PC-9 (cell line): ENCODE measurements at regions of chr20 and their contacts with region 1.

Region 1: DNA sequence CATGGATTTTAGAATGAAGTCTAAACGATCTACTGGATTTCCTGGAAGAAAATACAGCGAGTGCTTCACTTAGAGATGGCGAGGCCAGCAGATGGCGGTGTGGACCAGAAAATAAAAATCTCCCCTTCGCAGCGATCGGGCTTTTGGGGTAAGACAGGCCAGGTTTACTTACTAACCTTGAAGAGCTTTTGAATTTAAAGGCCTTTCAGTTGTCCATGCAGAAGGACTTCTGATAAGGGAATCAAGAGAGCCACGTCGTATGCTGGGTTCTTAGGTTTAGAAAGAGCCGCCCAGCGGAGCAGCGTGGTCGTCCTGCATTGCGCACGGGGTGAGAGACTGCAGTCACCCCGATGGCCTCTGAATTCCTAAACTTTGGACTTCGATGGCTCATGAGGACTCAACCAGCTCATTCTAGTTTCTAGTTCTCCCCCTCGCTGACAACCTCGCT is 125.2 kb upstream of the RALGAPA2 start:
- DNase-seq: peak in 1 of 2 experiments; percentile 35
- H3K4me3 ChIP-seq: no peak overlapping the region
- H3K27ac ChIP-seq: no peak overlapping the region
- H3K4me1 ChIP-seq: no peaks in the 10 kb centered on the region
- H3K27me3 ChIP-seq: peaks cover 51% of the 10 kb centered on the region
- CTCF ChIP-seq: peak; percentile 79

Region 2: GRCh38 chr20:20894753-20895152 is 57.2 kb after region 1 on chr20:
- CTCF ChIA-PET with region 1: no interaction called
- POLR2A ChIA-PET with region 1: no interaction called
- intact Hi-C with region 1: no loop called
- DNase-seq: no peak
- H3K4me3 ChIP-seq: no peak overlapping the region
- H3K27ac ChIP-seq: no peak overlapping the region
- H3K4me1 ChIP-seq: no peaks in the 10 kb centered on the region
- H3K27me3 ChIP-seq: peaks cover 64% of the 10 kb centered on the region
- CTCF ChIP-seq: no peak

Region 3: DNA sequence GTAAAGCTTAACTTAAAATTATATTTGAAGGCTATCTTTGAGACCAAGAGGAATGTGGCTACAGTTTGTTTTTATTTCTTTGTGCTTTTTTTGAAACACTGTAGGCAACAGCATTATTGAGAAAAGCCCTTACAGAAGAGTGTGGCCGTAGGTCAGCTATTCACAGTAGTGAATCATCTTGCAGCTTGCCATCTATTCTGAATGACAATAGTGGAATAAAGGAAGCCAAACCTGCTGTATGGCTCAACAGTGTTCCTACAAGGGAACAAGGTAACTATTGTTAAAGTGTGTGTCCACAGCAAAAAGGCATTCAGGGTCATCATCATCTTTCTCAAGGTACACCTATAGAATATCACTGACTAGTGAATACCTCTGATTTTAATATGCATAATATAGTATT is 376.8 kb after region 1 on chr20:
- CTCF ChIA-PET with region 1: no interaction called
- POLR2A ChIA-PET with region 1: no interaction called
- intact Hi-C with region 1: no loop called
- DNase-seq: peak in 1 of 2 experiments; percentile 63
- H3K4me3 ChIP-seq: no peak overlapping the region
- H3K27ac ChIP-seq: no peak overlapping the region
- H3K4me1 ChIP-seq: 0 out of 2 replicates have a peak, but pooled peaks cover 11% of the 10 kb centered on the region
- H3K27me3 ChIP-seq: no peaks in the 10 kb centered on the region
- CTCF ChIP-seq: no peak

Region 4: GRCh38 chr20:21615617-21616080 is 778.1 kb after region 1 on chr20:
- CTCF ChIA-PET with region 1: no interaction called
- POLR2A ChIA-PET with region 1: no interaction called
- intact Hi-C with region 1: loop called (anchors 1 kb)
- DNase-seq: peak in 1 of 2 experiments; percentile 41
- H3K4me3 ChIP-seq: no peak overlapping the region
- H3K27ac ChIP-seq: no peak overlapping the region
- H3K4me1 ChIP-seq: no peaks in the 10 kb centered on the region
- H3K27me3 ChIP-seq: peaks cover 31% of the 10 kb centered on the region; the same call in 1 of the 2 replicates
- CTCF ChIP-seq: peak; percentile 80